Activated naive CD4-positive, alpha-beta T cell treated with anti-CD3 and anti-CD28 coated beads for 36 hours (primary cell): ENCODE measurements at regions of chr1 and their contacts with region 1.

Region 1: GRCh38 chr1:1122078-1122811 is 6.4 kb upstream of the C1orf159 start:
- DNase-seq: peak; percentile 89
- H3K4me3 Mint-ChIP-seq: no peak overlapping the region
- H3K27ac Mint-ChIP-seq: no peak overlapping the region
- H3K4me1 Mint-ChIP-seq: peaks cover 2% of the 10 kb centered on the region
- H3K27me3 Mint-ChIP-seq: no peaks in the 10 kb centered on the region

Region 2: GRCh38 chr1:1047407-1047806 is 74.8 kb before region 1 on chr1:
- CTCF ChIA-PET with region 1: no interaction called
- intact Hi-C with region 1: no loop called
- DNase-seq: no peak
- H3K4me3 Mint-ChIP-seq: no peak overlapping the region
- H3K27ac Mint-ChIP-seq: no peak overlapping the region
- H3K4me1 Mint-ChIP-seq: no peaks in the 10 kb centered on the region
- H3K27me3 Mint-ChIP-seq: no peaks in the 10 kb centered on the region

Region 3: GRCh38 chr1:1084351-1085170 is 37.7 kb before region 1 on chr1:
- CTCF ChIA-PET with region 1: no interaction called
- intact Hi-C with region 1: no loop called
- DNase-seq: no peak
- H3K4me3 Mint-ChIP-seq: no peak overlapping the region
- H3K27ac Mint-ChIP-seq: no peak overlapping the region
- H3K4me1 Mint-ChIP-seq: peaks cover 5% of the 10 kb centered on the region
- H3K27me3 Mint-ChIP-seq: no peaks in the 10 kb centered on the region

Region 4: DNA sequence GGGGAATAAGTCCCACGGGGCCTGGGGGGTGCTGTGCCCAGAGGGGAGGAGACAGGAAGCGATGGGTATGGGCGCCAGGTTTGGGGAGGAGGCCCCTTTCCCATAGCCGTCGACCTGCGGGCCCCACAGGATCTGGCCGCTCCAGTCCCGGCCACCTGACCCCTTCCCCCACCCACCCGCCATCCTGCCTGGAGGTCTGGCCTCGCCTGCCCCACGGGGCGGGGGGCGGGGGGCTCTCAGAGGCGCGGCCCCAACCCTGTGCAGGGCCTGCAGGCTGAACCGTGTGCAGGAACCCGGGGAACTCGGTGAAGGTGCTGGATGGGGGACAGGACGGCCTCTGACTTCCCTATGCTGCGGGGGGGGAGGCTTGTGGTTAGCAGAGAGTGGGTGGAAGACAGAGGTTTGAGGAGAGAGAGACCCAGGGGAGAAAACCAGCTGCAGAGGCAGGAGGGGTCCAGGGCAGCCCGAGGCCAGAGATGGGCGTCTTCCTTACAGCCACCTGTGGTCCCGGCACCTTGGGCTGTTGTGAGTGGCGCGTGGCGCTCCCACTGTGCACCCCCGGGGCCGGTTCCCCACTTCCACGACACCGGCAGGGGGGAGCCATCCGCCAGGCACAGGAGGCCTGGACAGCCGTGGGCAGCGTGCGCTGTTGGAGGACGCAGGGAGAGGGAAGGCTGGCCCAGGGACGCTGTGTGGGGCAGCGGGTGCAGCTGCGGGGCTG is 86.6 kb after region 1 on chr1:
- CTCF ChIA-PET with region 1: interaction called, 8 read pairs
- intact Hi-C with region 1: loop called (anchors 2 kb)
- DNase-seq: peak; percentile 66
- H3K4me3 Mint-ChIP-seq: peak overlapping the region; percentile 80
- H3K27ac Mint-ChIP-seq: peak overlapping the region; percentile 89
- H3K4me1 Mint-ChIP-seq: peaks cover 34% of the 10 kb centered on the region
- H3K27me3 Mint-ChIP-seq: no peaks in the 10 kb centered on the region

Region 5: GRCh38 chr1:1250786-1251284 is 128.6 kb after region 1 on chr1:
- CTCF ChIA-PET with region 1: interaction called, 43 read pairs
- intact Hi-C with region 1: loop called (anchors 1 kb)
- DNase-seq: peak; percentile 91
- H3K4me3 Mint-ChIP-seq: peak overlapping the region; percentile 10
- H3K27ac Mint-ChIP-seq: peak overlapping the region; percentile 85
- H3K4me1 Mint-ChIP-seq: peaks cover 22% of the 10 kb centered on the region
- H3K27me3 Mint-ChIP-seq: peaks cover 2% of the 10 kb centered on the region

Region 6: DNA sequence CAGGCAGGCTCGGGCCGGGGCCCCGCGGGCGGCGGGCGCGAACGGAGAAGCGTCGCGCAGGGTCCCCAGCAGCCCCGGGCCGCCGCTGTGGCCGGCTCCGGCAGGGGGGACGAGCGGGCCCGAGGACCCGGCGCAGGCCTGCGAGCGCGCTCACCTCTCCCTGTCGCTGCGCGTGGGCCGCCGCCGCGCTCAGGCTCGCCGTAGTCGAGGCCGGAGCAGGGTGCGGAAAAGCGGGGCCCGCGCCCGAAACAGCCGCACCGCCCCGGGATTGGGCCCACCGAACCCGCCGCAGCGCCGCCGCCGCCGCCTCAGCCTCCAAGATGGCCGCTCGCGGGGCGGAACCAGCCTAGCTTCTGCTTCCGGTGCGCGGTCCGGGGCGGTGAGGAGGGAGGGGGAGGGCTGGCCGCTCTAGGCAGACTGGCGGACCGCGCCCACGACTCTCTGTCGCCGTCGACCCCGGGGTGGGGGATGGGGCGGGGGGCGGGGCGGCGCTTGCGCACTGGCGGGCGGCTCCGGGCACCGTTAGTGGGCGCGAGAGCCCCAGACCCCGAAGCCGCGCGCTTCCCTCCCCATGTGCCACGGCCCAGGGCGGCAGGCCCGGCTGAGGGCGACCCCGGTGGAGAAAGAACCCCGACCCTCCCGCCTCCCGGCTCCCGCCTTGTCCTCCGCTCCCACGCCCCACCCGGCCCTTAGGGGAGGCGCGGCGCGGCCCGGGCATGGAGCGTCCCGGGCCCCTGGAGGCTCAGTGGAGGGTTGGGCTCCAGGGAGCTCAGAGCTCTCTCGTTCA is 151.5 kb after region 1 on chr1 and contains the start of gene UBE2J2:
- CTCF ChIA-PET with region 1: interaction called, 10 read pairs
- intact Hi-C with region 1: no loop called
- DNase-seq: peak; percentile 95
- H3K4me3 Mint-ChIP-seq: peak within 1 kb of the TSS; percentile 85
- H3K27ac Mint-ChIP-seq: peak within 1 kb of the TSS; percentile 80
- H3K4me1 Mint-ChIP-seq: peaks cover 39% of the 10 kb centered on the region
- H3K27me3 Mint-ChIP-seq: no peaks in the 10 kb centered on the region
- total RNA-seq, gene UBE2J2: 48.5 to 49.7 TPM

Region 7: GRCh38 chr1:1291548-1292441 is 169.6 kb after region 1 on chr1:
- CTCF ChIA-PET with region 1: interaction called, 34 read pairs
- intact Hi-C with region 1: loop called (anchors 2 kb)
- DNase-seq: peak; percentile 73
- H3K4me3 Mint-ChIP-seq: no peak overlapping the region
- H3K27ac Mint-ChIP-seq: no peak overlapping the region
- H3K4me1 Mint-ChIP-seq: no peaks in the 10 kb centered on the region
- H3K27me3 Mint-ChIP-seq: no peaks in the 10 kb centered on the region

Region 8: DNA sequence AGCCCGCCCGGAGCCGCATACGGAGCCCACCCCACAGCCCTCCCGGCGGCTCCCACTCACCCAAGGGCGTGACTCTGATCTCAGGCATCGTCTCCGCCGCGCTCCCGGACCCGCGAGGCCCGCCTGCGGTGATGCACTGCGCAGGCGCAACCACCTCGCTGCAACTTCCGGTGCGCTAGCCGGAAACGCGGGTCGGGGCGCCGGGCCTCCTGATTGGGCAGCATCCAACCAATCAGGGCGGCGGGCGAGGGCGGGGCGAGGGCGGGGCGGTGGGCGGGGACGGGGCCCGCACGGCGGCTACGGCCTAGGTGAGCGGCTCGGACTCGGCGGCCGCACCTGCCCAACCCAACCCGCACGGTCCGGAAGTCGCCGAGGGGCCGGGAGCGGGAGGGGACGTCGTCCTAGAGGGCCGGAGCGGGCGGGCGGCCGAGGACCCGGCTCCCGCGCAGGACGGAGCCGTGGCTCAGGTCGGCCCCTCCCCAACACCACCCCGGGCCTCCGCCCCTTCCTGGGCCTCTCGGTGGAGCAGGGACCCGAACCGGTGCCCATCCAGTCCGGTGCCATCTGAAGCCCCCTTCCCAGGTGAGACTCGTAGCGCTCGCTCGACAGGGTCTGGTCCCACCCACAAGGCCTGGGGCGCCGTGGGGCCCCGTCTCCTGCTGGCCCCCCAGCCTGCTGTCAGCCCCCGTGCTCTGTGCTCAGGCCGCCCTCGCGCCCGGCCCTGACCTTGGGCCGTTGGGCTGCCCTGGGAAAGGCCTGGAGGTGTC is 202.5 kb after region 1 on chr1 and contains the starts of genes CPTP and INTS11:
- CTCF ChIA-PET with region 1: no interaction called
- intact Hi-C with region 1: no loop called
- DNase-seq: peak; percentile 97
- H3K4me3 Mint-ChIP-seq: peak within 1 kb of the TSS; percentile 92
- H3K27ac Mint-ChIP-seq: peak within 1 kb of the TSS; percentile 84
- H3K4me1 Mint-ChIP-seq: peaks cover 36% of the 10 kb centered on the region
- H3K27me3 Mint-ChIP-seq: no peaks in the 10 kb centered on the region
- total RNA-seq, gene CPTP: 5.6 to 5.7 TPM
- total RNA-seq, gene INTS11: 117 to 118 TPM